Heart right ventricle (tissue), 16 donors: ENCODE measurements at regions of chr1 and their contacts with region 1.

Region 1: DNA sequence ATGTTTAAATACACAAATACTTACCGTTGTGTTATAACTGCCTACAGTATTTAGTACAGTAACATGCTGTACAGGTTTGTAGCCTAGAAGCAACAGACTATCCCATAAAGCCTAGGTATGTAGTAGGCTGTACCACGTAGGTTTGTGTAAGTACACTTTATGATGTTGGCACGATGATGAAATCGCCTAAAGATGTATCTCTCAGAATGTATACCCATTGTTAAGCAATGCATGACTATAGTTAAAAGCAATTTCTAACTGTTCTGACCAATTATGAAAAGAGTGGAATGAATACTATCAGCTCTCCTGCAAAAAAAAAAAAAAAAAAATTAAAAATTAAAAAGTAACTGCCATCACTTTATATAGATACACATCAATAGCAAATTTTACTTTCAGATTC is 11.4 kb downstream of the HP1BP3 start:
- DNase-seq: no peak
- ATAC-seq: no peak
- H3K4me3 ChIP-seq: no peak overlapping the region
- H3K27ac ChIP-seq: no peak overlapping the region
- H3K4me1 ChIP-seq: peaks cover 0 to 31% (median 13%) of the 10 kb centered on the region in 9 donors
- H3K27me3 ChIP-seq: no peaks in the 10 kb centered on the region
- CTCF ChIP-seq: no peak

Region 2: DNA sequence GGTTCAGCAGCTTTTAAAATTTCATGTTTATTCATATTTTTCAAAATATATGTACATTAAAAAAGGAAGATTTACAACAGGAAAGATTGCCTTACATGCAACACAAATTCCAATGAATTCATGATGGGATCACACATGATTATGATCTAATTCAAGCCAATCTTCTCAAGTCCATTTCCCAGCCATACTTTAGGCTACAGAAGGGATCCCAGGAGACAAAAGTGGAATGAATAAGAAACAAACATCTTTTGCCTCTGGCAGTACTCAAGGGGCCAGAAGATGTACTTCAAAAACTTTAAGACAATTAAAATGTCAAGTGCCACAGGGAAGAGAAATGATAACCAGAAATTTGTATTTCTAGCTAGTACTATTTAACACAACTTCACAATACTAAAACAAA is 33.0 kb before region 1 on chr1:
- intact Hi-C with region 1: loop called in 1 of 10 experiments (anchors 5 kb)
- DNase-seq: no peak
- ATAC-seq: no peak
- H3K4me3 ChIP-seq: no peak overlapping the region
- H3K27ac ChIP-seq: no peak overlapping the region
- H3K4me1 ChIP-seq: peaks cover 0 to 7% (median 0%) of the 10 kb centered on the region in 9 donors
- H3K27me3 ChIP-seq: no peaks in the 10 kb centered on the region
- CTCF ChIP-seq: no peak